Mammary epithelial cell (primary cell): ENCODE measurements at regions of chr3 and their contacts with region 1.

Region 1: GRCh38 chr3:16247276-16248061 is 17.3 kb downstream of the DPH3 start:
- DNase-seq: peak; percentile 63
- H3K4me3 ChIP-seq: no peak overlapping the region
- H3K27ac ChIP-seq: no peak overlapping the region
- H3K4me1 ChIP-seq: no peaks in the 10 kb centered on the region
- H3K27me3 ChIP-seq: no peaks in the 10 kb centered on the region
- CTCF ChIP-seq: peak; percentile 89 to 95

Region 2: DNA sequence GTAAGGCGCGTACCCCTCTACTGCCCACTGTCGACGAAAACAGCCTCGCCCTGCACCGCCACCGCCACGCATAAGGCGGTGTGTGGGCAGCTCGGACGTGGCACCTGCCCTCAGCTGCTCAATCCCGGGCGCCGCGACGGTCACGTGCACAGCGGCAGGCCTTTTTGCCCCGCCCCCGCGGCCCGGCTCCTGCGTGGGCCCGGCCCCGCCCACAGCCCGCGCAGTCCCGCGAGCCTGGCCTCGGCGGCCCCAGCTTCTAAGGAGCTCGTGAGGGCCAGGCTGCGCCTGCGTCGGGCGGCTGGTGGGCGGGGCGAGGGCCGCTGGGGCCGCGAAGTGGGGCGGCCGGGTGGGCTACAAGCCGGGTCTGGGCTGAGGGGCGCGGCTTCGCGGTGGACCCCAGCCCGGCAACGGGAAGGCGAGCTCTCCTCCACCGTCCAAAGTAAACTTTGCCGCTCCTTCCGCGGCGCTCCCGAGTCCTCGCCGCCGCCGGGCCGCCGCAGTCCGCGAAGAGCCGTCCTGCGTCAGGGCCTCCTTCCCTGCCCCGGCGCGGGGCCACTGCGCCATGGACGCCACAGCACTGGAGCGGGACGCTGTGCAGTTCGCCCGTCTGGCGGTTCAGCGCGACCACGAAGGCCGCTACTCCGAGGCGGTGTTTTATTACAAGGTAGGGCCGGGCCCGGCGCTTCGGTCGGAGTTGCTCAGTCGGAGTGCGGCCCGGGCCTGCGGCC is 1041.4 kb before region 1 on chr3 and contains the start of gene CAPN7:
- CTCF ChIA-PET with region 1: no interaction called
- dilution Hi-C with region 1: no loop called
- in situ Hi-C with region 1: no loop called
- intact Hi-C with region 1: loop called (anchors 5 kb)
- DNase-seq: peak; percentile 89
- H3K4me3 ChIP-seq: peak within 1 kb of the TSS; percentile 93 to 96 (median 95)
- H3K27ac ChIP-seq: peak within 1 kb of the TSS; percentile 70
- H3K4me1 ChIP-seq: peaks cover 8% of the 10 kb centered on the region
- H3K27me3 ChIP-seq: no peaks in the 10 kb centered on the region
- CTCF ChIP-seq: peak; percentile 21 to 43
- total RNA-seq, gene CAPN7: 32.8 to 46.0 TPM

Region 3: DNA sequence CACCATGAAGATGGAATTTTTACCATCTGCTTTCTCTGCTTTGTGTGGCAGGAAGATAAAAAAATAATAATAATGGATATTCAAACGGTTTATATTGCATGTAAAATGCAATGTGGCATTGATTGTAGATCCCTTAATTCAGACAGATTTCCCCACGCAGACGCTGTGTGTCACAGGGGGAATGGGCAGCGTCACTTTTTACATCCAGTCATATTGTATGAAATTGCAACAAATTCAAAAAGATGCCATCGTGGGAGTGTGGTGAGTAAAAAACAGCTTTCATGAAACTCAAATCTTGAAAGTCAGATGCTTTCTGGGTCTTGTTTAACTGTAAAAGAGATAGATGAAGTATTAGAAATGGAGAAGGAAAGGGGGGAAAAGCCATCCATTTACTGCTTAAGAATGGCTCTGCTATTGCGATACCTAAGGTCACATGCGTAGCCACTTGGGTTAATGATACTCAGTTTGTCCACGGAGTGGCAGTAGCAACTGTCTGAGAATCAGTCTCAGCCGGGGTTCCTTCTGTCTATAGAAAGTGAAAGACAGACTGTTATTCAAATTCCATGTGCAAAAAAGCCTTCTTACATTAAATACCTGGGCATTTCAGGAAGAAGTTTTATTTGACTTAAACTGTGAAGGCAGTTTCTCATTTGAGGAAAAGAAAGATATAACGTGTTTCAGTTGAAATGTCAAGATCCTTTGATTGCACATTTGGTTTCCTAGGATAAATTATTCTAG is 617.4 kb before region 1 on chr3:
- CTCF ChIA-PET with region 1: no interaction called
- dilution Hi-C with region 1: no loop called
- in situ Hi-C with region 1: loop called in 1 of 2 experiments (anchors 25 kb)
- intact Hi-C with region 1: loop called (anchors 1 kb)
- DNase-seq: peak; percentile 72
- H3K4me3 ChIP-seq: peak overlapping the region in 2 of 3 experiments; percentile 44 to 52
- H3K27ac ChIP-seq: peak overlapping the region; percentile 76
- H3K4me1 ChIP-seq: peaks cover 46% of the 10 kb centered on the region
- H3K27me3 ChIP-seq: no peaks in the 10 kb centered on the region
- CTCF ChIP-seq: peak; percentile 71 to 78

Region 4: GRCh38 chr3:15820911-15821310 is 426.6 kb before region 1 on chr3:
- CTCF ChIA-PET with region 1: no interaction called
- dilution Hi-C with region 1: no loop called
- in situ Hi-C with region 1: loop called in 1 of 2 experiments (anchors 10 kb)
- intact Hi-C with region 1: no loop called
- DNase-seq: no peak
- H3K4me3 ChIP-seq: no peak overlapping the region
- H3K27ac ChIP-seq: no peak overlapping the region
- H3K4me1 ChIP-seq: peaks cover 12% of the 10 kb centered on the region
- H3K27me3 ChIP-seq: no peaks in the 10 kb centered on the region
- CTCF ChIP-seq: no peak

Region 5: GRCh38 chr3:16048435-16049318 is 198.8 kb before region 1 on chr3:
- CTCF ChIA-PET with region 1: no interaction called
- dilution Hi-C with region 1: no loop called
- in situ Hi-C with region 1: loop called (anchors 5 to 10 kb)
- intact Hi-C with region 1: loop called (anchors 1 kb)
- DNase-seq: peak; percentile 55
- H3K4me3 ChIP-seq: peak overlapping the region in 2 of 3 experiments; percentile 6 to 16
- H3K27ac ChIP-seq: no peak overlapping the region
- H3K4me1 ChIP-seq: no peaks in the 10 kb centered on the region
- H3K27me3 ChIP-seq: no peaks in the 10 kb centered on the region
- CTCF ChIP-seq: peak; percentile 58 to 81

Region 6: DNA sequence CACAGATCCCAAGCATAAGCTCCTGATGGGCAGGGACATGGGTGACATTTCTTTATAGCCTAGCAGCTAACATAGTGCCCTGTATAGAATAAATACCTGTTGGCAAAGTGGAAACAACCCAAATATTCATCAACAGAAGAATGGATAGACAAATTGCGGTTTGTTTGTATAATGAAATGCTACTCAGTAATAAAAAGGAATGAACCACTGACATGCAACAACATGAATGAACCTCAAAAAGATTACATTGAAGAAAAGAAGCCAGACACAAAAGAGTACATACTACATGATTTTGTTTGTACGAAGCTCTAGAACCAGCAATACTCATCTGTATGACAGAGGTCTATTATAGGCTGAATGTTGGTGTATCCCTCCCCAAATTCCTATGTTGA is 106.6 kb before region 1 on chr3:
- CTCF ChIA-PET with region 1: no interaction called
- dilution Hi-C with region 1: no loop called
- in situ Hi-C with region 1: no loop called
- intact Hi-C with region 1: loop called (anchors 1 kb)
- DNase-seq: no peak
- H3K4me3 ChIP-seq: no peak overlapping the region
- H3K27ac ChIP-seq: no peak overlapping the region
- H3K4me1 ChIP-seq: peaks cover 11% of the 10 kb centered on the region
- H3K27me3 ChIP-seq: no peaks in the 10 kb centered on the region
- CTCF ChIP-seq: no peak

Region 7: GRCh38 chr3:16183601-16184270 is 63.7 kb before region 1 on chr3:
- CTCF ChIA-PET with region 1: no interaction called
- dilution Hi-C with region 1: no loop called
- in situ Hi-C with region 1: loop called in 1 of 2 experiments (anchors 10 kb)
- intact Hi-C with region 1: loop called (anchors 1 kb)
- DNase-seq: peak; percentile 24
- H3K4me3 ChIP-seq: no peak overlapping the region
- H3K27ac ChIP-seq: no peak overlapping the region
- H3K4me1 ChIP-seq: peaks cover under 1% of the 10 kb centered on the region
- H3K27me3 ChIP-seq: no peaks in the 10 kb centered on the region
- CTCF ChIP-seq: no peak